ENCODE measurements at regions of chr15 and their contacts with region 1.

Region 1: GRCh38 chr15:79923515-79924395 is 26.9 kb upstream of the MTHFS start:
- DNase-seq: peak; percentile 99
- ATAC-seq: peak; percentile 96
- H3K4me3 ChIP-seq: peak overlapping the region; percentile 77 to 100 (median 97)
- H3K4me3 Mint-ChIP-seq: peak overlapping the region; percentile 96
- H3K27ac ChIP-seq: peak overlapping the region; percentile 95 to 97
- H3K27ac Mint-ChIP-seq: peak overlapping the region; percentile 97
- H3K4me1 ChIP-seq: peaks cover 14 to 15% of the 10 kb centered on the region in 2 donors
- H3K4me1 Mint-ChIP-seq: peaks cover 30% of the 10 kb centered on the region
- H3K27me3 ChIP-seq: no peaks in the 10 kb centered on the region
- H3K27me3 Mint-ChIP-seq: no peaks in the 10 kb centered on the region
- CTCF ChIP-seq: no peak

Region 2: GRCh38 chr15:79904271-79904670 is 19.5 kb before region 1 on chr15:
- CTCF ChIA-PET with region 1: interaction called, 6 read pairs
- POLR2A ChIA-PET with region 1: interaction called, 17 read pairs
- intact Hi-C with region 1: loop called (anchors 1 kb)
- DNase-seq: no peak
- ATAC-seq: no peak
- H3K4me3 ChIP-seq: no peak overlapping the region
- H3K4me3 Mint-ChIP-seq: no peak overlapping the region
- H3K27ac ChIP-seq: no peak overlapping the region
- H3K27ac Mint-ChIP-seq: no peak overlapping the region
- H3K4me1 ChIP-seq: peaks cover 3 to 9% of the 10 kb centered on the region in 2 donors
- H3K4me1 Mint-ChIP-seq: peaks cover 26% of the 10 kb centered on the region
- H3K27me3 ChIP-seq: no peaks in the 10 kb centered on the region
- H3K27me3 Mint-ChIP-seq: no peaks in the 10 kb centered on the region
- CTCF ChIP-seq: no peak

Region 3: DNA sequence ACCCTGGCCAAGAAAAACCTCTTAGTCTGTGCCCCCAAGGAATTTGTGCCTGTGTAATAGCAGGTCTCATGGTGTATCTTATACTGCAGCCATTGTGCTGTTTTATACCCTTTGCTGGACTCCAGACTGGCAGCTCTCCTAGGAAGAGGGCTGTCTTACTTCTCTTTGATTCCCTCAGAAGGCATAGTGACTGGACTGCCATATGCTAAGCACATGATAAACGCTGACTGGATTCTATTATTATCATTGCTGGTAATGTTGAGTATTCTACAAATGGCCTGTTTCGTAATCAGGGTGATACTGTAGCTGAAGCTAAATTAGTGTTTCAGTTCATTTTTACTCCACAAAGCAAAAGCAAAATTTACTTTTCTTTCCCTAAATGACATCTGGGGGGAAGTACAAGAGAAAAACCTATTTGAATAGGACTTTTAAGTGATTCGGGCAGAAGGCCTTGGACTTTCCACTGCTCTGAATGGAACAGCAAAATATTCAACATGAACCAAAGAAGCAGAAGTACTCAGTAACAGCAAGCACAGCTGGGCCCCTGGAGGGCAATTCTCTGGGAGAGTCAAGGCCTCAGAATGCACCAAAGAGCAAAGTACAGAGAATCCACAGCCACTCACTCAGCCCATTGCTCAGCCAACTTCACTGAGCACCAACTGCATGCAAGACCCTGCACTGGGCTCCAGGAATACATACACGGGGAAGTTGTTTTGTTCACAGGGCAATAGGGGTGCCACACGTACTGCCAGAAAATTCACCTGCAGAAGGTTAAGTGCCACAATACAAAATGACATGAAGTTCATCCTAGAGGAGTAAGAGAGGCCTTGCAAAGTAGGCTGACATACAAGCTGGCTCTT is 55.1 kb after region 1 on chr15:
- CTCF ChIA-PET with region 1: interaction called, 4 read pairs
- POLR2A ChIA-PET with region 1: interaction called, 15 read pairs
- intact Hi-C with region 1: no loop called
- DNase-seq: peak; percentile 63
- ATAC-seq: peak; percentile 41
- H3K4me3 ChIP-seq: no peak overlapping the region
- H3K4me3 Mint-ChIP-seq: peak overlapping the region; percentile 87
- H3K27ac ChIP-seq: peak overlapping the region; percentile 57 to 79
- H3K27ac Mint-ChIP-seq: peak overlapping the region; percentile 76
- H3K4me1 ChIP-seq: peaks cover 50 to 55% of the 10 kb centered on the region in 2 donors
- H3K4me1 Mint-ChIP-seq: peaks cover 54% of the 10 kb centered on the region
- H3K27me3 ChIP-seq: peaks cover 0 to 3% (median under 1%) of the 10 kb centered on the region in 4 experiments
- H3K27me3 Mint-ChIP-seq: no peaks in the 10 kb centered on the region
- CTCF ChIP-seq: no peak

Region 4: DNA sequence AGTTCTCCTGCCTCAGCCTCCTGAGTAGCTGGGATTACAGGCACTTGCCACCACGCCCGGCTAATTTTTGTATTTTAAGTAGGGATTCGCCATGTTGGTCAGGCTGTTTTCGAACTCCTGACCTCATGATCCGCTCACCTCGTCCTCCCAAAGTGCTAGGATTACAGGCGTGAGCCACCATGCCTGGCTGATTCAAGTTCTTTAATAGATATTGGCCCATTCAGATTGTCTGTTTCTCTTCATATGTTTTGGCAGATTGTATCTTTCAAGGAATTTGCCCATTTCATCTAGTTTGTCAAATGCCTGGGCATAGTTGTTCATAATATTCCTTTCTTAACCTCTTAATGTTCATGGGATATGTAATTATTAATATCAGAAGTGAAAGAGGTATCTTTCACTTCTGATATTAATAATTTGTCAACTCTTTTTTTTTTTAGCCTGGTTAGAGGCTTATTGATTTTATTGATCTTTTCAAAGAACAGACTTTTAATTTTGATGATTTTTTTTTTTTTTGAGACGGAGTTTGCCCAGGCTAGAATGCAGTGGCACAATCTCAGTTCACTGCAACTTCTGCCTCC is 95.5 kb after region 1 on chr15:
- CTCF ChIA-PET with region 1: no interaction called
- POLR2A ChIA-PET with region 1: interaction called, 10 read pairs
- intact Hi-C with region 1: loop called (anchors 1 kb)
- DNase-seq: no peak
- ATAC-seq: no peak
- H3K4me3 ChIP-seq: peak overlapping the region in 1 of 5 experiments; percentile 7
- H3K4me3 Mint-ChIP-seq: peak overlapping the region; percentile 96
- H3K27ac ChIP-seq: peak overlapping the region; percentile 70 to 81
- H3K27ac Mint-ChIP-seq: peak overlapping the region; percentile 98
- H3K4me1 ChIP-seq: peaks cover 31 to 40% of the 10 kb centered on the region in 2 donors
- H3K4me1 Mint-ChIP-seq: peaks cover 65% of the 10 kb centered on the region
- H3K27me3 ChIP-seq: no peaks in the 10 kb centered on the region
- H3K27me3 Mint-ChIP-seq: no peaks in the 10 kb centered on the region
- CTCF ChIP-seq: no peak

Region 5: GRCh38 chr15:80152180-80152845 is 228.6 kb after region 1 on chr15:
- CTCF ChIA-PET with region 1: no interaction called
- POLR2A ChIA-PET with region 1: interaction called, 7 read pairs
- intact Hi-C with region 1: loop called (anchors 1 kb)
- DNase-seq: peak; percentile 89
- ATAC-seq: peak; percentile 88
- H3K4me3 ChIP-seq: peak overlapping the region; percentile 6 to 89 (median 77)
- H3K4me3 Mint-ChIP-seq: peak overlapping the region; percentile 81
- H3K27ac ChIP-seq: peak overlapping the region in 1 of 2 donors; percentile 38
- H3K27ac Mint-ChIP-seq: peak overlapping the region; percentile 62
- H3K4me1 ChIP-seq: peaks cover 8 to 11% of the 10 kb centered on the region in 2 donors
- H3K4me1 Mint-ChIP-seq: peaks cover 21% of the 10 kb centered on the region
- H3K27me3 ChIP-seq: no peaks in the 10 kb centered on the region
- H3K27me3 Mint-ChIP-seq: no peaks in the 10 kb centered on the region
- CTCF ChIP-seq: no peak

Measured in B cell (primary cell).